Naive thymus-derived CD4-positive, alpha-beta T cell (primary cell): ENCODE measurements at regions of chr11 and their contacts with region 1.

Region 1: DNA sequence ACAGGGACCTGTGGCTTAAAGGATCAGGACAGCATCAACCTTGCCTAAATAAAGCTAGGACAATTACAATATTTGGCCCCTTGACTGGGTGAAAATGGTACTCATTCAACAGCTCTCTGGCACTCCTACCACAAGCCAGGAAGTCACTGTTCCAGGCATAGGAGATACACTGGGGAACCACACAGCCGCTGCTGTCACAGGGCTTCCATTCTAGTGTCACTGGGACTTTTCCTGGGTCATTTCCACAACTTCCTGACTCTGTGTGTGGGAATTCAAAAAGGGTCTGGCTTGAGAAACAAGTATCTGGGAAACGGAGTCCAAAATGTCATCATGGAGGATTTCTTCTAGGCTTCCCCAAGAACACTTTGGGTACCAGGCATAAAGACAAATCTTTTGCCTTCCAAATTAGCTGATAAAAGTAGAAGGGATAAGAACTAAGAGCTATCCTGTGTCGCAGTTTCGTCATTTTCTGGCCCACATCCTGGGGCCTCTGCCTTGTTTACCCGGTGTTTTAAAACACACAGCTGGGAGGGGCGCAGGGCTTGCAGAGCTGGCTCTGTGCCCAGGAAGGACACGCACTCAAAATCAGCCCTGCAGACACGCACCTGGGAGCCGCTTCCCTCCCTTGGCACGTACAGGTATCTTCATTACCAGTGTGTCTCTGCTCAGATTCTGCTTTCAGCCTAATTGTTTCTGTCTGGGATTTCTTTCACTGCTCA is 38.0 kb downstream of the TMEM45B start:
- DNase-seq: peak; percentile 34 to 96 (median 93)
- ATAC-seq: peak; percentile 94
- H3K4me3 ChIP-seq: peak overlapping the region; percentile 21
- H3K4me3 Mint-ChIP-seq: peak overlapping the region; percentile 49 to 84 (median 74)
- H3K27ac ChIP-seq: peak overlapping the region; percentile 68
- H3K27ac Mint-ChIP-seq: peak overlapping the region; percentile 94 to 99 (median 98)
- H3K4me1 ChIP-seq: peaks cover 14 to 24% of the 10 kb centered on the region in 2 donors
- H3K4me1 Mint-ChIP-seq: peaks cover 17 to 68% (median 51%) of the 10 kb centered on the region in 7 donors
- H3K27me3 ChIP-seq: no peaks in the 10 kb centered on the region
- H3K27me3 Mint-ChIP-seq: peaks cover 0 to 2% (median 0%) of the 10 kb centered on the region in 5 donors

Region 2: DNA sequence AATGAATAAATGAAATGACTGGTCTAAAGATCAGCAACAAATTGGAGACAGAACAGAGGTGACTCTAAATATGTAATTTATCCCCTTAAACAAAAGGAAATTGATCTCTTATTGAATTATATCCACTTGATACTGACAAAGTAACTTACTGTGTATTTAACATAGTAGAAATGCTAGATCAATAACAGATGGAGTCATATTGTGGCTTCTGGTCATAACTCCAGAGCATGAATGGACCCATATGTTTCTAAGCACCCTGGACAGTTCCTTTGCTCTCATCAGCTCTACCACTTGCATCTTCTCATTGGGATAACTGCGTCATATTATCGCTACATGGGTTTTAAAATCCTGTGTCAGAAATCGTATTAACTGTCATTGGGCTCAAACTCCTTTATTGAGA is 1488.6 kb before region 1 on chr11:
- CTCF ChIA-PET with region 1: no interaction called
- POLR2A ChIA-PET with region 1: no interaction called
- intact Hi-C with region 1: no loop called
- DNase-seq: peak in 5 of 9 donors; percentile 17 to 48 (median 45)
- ATAC-seq: no peak
- H3K4me3 ChIP-seq: no peak overlapping the region
- H3K4me3 Mint-ChIP-seq: no peak overlapping the region
- H3K27ac ChIP-seq: no peak overlapping the region
- H3K27ac Mint-ChIP-seq: peak overlapping the region in 2 of 9 donors; percentile 40 to 85
- H3K4me1 ChIP-seq: no peaks in the 10 kb centered on the region
- H3K4me1 Mint-ChIP-seq: peaks cover 8 to 47% (median 37%) of the 10 kb centered on the region in 7 donors
- H3K27me3 ChIP-seq: no peaks in the 10 kb centered on the region
- H3K27me3 Mint-ChIP-seq: peaks cover 0 to 5% (median 0%) of the 10 kb centered on the region in 5 donors

Region 3: DNA sequence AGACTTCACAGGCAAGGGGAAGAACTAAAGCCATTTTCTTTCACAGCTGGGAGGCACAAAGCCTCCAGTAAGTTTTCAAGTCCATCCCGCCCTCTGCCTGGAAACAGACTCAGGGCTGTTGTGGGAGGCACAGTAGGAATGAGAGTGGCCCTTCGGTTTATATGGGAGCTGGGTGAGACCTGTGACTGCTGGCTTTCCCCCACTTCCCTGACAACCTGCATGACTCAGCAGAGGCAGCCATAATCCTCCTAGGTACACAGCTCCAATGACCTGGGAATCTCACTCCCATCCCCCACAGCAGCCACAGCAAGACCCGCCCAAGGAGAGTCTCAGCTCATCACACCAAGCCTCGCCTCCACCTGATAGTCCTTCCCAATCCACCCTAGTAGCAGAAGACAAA is 50.1 kb before region 1 on chr11:
- CTCF ChIA-PET with region 1: no interaction called
- POLR2A ChIA-PET with region 1: interaction called, 38 read pairs
- intact Hi-C with region 1: loop called in 1 of 2 experiments (anchors 1 kb)
- DNase-seq: no peak
- ATAC-seq: no peak
- H3K4me3 ChIP-seq: no peak overlapping the region
- H3K4me3 Mint-ChIP-seq: peak overlapping the region; percentile 64 to 85 (median 78)
- H3K27ac ChIP-seq: peak overlapping the region; percentile 17
- H3K27ac Mint-ChIP-seq: peak overlapping the region; percentile 44 to 99 (median 91)
- H3K4me1 ChIP-seq: peaks cover 0 to 31% of the 10 kb centered on the region in 2 donors
- H3K4me1 Mint-ChIP-seq: peaks cover 25 to 90% (median 73%) of the 10 kb centered on the region in 7 donors
- H3K27me3 ChIP-seq: no peaks in the 10 kb centered on the region
- H3K27me3 Mint-ChIP-seq: peaks cover 0 to 37% (median 0%) of the 10 kb centered on the region in 5 donors

Region 4: DNA sequence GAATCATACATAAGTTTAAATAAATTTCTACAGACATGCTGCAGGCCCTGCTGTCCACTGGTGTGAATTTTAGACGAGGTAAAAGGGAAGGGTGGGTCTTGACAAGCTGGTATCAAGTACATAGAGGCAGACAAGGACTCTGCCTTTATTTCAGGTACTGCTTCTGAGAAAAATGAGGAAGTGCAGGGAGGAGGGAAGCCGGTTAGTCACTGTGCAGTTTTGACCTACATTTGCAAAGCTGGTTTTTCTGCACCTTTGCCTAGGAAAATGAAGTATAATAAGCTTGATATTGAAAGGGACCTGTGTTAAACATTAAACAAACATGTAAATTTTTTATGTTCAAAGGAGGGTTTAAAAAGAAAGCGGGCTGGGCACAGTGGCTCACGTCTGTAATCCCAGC is 13.4 kb before region 1 on chr11:
- CTCF ChIA-PET with region 1: interaction called, 5 read pairs
- POLR2A ChIA-PET with region 1: interaction called, 46 read pairs
- intact Hi-C with region 1: loop called (anchors 1 kb)
- DNase-seq: no peak
- ATAC-seq: no peak
- H3K4me3 ChIP-seq: no peak overlapping the region
- H3K4me3 Mint-ChIP-seq: peak overlapping the region in 7 of 10 donors; percentile 26 to 70 (median 44)
- H3K27ac ChIP-seq: no peak overlapping the region
- H3K27ac Mint-ChIP-seq: peak overlapping the region in 7 of 9 donors; percentile 3 to 88 (median 66)
- H3K4me1 ChIP-seq: peaks cover 0 to 12% of the 10 kb centered on the region in 2 donors
- H3K4me1 Mint-ChIP-seq: peaks cover 15 to 76% (median 46%) of the 10 kb centered on the region in 7 donors
- H3K27me3 ChIP-seq: no peaks in the 10 kb centered on the region
- H3K27me3 Mint-ChIP-seq: peaks cover 0 to 8% (median 0%) of the 10 kb centered on the region in 5 donors